PC-9 (cell line): ENCODE measurements at regions of chr2 and their contacts with region 1.

Region 1: DNA sequence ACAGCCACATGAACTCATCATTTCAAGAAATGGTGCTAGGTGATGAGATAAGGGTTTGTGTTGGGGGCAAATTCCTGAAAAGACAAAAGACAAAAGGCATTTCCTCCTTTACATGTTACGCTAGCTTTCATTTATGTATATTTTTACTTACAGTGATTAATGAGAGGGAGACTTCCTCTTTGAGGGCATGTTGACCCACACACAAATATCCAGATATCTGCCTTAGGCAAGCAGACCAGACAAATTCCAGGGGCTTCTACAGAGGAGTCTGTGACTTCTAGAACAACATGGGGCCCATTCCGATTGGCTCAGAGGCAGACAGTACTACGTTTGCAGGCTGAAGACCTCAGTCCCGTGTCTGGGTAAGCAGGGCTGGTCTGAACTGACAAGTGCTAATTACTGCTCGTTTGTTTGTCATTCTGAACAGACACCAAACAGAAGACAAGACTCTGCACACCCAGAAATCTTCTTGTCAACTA is 74.8 kb upstream of the ST6GAL2 start:
- DNase-seq: no peak
- H3K4me3 ChIP-seq: no peak overlapping the region
- H3K27ac ChIP-seq: no peak overlapping the region
- H3K4me1 ChIP-seq: no peaks in the 10 kb centered on the region
- H3K27me3 ChIP-seq: no peaks in the 10 kb centered on the region
- CTCF ChIP-seq: no peak

Region 2: GRCh38 chr2:107018366-107018765 is 57.6 kb after region 1 on chr2:
- CTCF ChIA-PET with region 1: no interaction called
- POLR2A ChIA-PET with region 1: no interaction called
- intact Hi-C with region 1: no loop called
- DNase-seq: no peak
- H3K4me3 ChIP-seq: no peak overlapping the region
- H3K27ac ChIP-seq: no peak overlapping the region
- H3K4me1 ChIP-seq: no peaks in the 10 kb centered on the region
- H3K27me3 ChIP-seq: no peaks in the 10 kb centered on the region
- CTCF ChIP-seq: no peak

Region 3: DNA sequence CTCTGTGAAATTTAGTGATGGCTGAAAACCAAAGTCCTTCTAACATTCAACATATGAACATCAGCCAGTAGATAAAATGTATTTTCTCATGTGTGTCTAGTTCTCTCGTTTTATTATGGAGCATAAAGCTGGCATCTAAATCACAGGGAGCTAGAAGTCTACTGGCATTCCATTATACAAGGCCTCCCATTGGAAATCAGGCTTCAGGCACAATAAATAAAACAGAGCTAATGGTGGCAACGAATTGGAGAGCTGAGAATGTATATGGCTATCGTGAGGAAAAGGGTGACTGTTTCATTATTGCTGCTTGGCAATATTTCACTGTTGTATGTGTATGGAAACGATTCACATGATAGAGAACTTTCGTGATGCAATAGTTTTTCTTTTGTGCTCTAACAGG is 1088.0 kb after region 1 on chr2:
- CTCF ChIA-PET with region 1: no interaction called
- POLR2A ChIA-PET with region 1: no interaction called
- intact Hi-C with region 1: loop called (anchors 10 kb)
- DNase-seq: no peak
- H3K4me3 ChIP-seq: no peak overlapping the region
- H3K27ac ChIP-seq: no peak overlapping the region
- H3K4me1 ChIP-seq: no peaks in the 10 kb centered on the region
- H3K27me3 ChIP-seq: peaks cover 8% of the 10 kb centered on the region
- CTCF ChIP-seq: no peak